Heart right ventricle (tissue), 16 donors: ENCODE measurements at regions of chr5 and their contacts with region 1.

Region 1: DNA sequence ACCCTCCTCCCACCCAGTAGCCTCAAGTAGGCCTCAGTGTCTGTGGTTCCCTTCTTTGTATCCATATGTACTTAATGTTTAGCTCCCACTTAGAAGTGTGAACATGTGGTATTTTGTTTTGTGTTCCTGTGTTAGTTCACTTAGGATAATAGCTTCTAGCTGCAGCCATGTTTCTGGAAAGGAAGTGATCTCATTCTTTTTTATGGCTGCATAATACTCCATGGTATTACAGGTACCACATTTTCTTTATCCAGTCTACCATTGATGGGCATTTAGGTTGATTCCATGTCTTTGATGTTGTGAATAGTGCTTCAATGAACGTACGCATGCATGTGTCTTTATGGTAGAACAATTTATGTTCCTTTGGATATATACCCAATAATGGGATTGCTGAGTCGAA is 74.8 kb downstream of the SLC12A2 start:
- DNase-seq: no peak
- ATAC-seq: no peak
- H3K4me3 ChIP-seq: no peak overlapping the region
- H3K27ac ChIP-seq: no peak overlapping the region
- H3K4me1 ChIP-seq: no peaks in the 10 kb centered on the region
- H3K27me3 ChIP-seq: no peaks in the 10 kb centered on the region
- CTCF ChIP-seq: no peak

Region 2: DNA sequence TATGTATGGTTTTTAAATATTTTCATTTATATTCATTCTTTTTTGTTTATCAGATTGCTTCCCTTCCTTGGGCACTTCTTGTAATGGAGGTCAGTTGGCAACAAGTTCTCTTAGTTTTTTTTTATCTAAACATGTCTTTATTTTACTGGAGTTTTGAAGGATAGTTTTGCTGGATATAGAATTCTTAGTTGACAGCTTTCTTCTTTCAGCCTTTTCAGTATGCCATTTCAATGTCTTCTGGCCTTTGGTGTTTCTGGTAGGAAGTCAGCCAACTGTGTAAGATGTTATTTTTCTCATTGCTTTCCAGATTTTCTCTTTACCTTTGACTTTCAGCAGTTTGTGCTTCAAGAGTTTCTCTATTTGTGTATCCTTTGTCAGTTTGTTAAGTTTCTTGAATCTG is 60.6 kb before region 1 on chr5:
- intact Hi-C with region 1: loop called in 1 of 10 experiments (anchors 2 kb)
- DNase-seq: no peak
- ATAC-seq: no peak
- H3K4me3 ChIP-seq: no peak overlapping the region
- H3K27ac ChIP-seq: no peak overlapping the region
- H3K4me1 ChIP-seq: peaks cover 0 to 39% (median 10%) of the 10 kb centered on the region in 9 donors
- H3K27me3 ChIP-seq: no peaks in the 10 kb centered on the region
- CTCF ChIP-seq: no peak

Region 3: GRCh38 chr5:128436749-128437188 is 278.4 kb after region 1 on chr5:
- intact Hi-C with region 1: no loop called
- DNase-seq: no peak
- ATAC-seq: peak in 5 of 8 donors; percentile 18 to 44 (median 28)
- H3K4me3 ChIP-seq: no peak overlapping the region
- H3K27ac ChIP-seq: no peak overlapping the region
- H3K4me1 ChIP-seq: peaks cover 0 to 8% (median 0%) of the 10 kb centered on the region in 9 donors
- H3K27me3 ChIP-seq: no peaks in the 10 kb centered on the region
- CTCF ChIP-seq: no peak